ENCODE measurements at regions of chr14 and their contacts with region 1.

Region 1: GRCh38 chr14:55855751-55856150 is 262.5 kb upstream of the PELI2 start:
- DNase-seq: no peak
- ATAC-seq: no peak
- H3K4me3 ChIP-seq: no peak overlapping the region
- H3K27ac ChIP-seq: no peak overlapping the region
- H3K4me1 ChIP-seq: peaks cover 0 to 24% (median 3%) of the 10 kb centered on the region in 9 donors
- H3K27me3 ChIP-seq: no peaks in the 10 kb centered on the region
- CTCF ChIP-seq: no peak

Region 2: GRCh38 chr14:55614304-55614703 is 241.4 kb before region 1 on chr14:
- intact Hi-C with region 1: no loop called
- DNase-seq: no peak
- ATAC-seq: no peak
- H3K4me3 ChIP-seq: no peak overlapping the region
- H3K27ac ChIP-seq: no peak overlapping the region
- H3K4me1 ChIP-seq: peaks cover 0 to 58% (median 32%) of the 10 kb centered on the region in 9 donors
- H3K27me3 ChIP-seq: no peaks in the 10 kb centered on the region
- CTCF ChIP-seq: no peak

Region 3: DNA sequence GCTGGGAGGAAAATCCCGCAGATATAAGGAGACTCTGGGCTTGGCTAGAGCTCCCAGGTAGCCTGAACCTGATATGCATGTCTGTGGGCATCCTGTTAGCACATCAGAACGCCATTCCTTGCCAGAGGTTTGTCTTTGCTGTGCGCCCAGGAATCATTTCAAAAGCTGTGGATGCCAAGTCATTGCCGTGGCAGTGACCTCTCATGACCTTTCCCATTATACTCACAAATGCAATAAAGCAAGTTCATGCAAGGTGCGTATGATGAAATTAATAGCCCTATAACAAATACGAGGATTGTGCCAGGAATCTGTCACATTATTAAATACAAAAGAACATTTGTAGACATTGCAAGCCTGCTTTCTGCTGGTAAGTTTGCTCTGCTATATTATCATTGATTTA is 33.4 kb after region 1 on chr14:
- intact Hi-C with region 1: no loop called
- DNase-seq: no peak
- ATAC-seq: peak in 1 of 8 donors; percentile 59
- H3K4me3 ChIP-seq: no peak overlapping the region
- H3K27ac ChIP-seq: no peak overlapping the region
- H3K4me1 ChIP-seq: peaks cover 0 to 5% (median 0%) of the 10 kb centered on the region in 9 donors
- H3K27me3 ChIP-seq: no peaks in the 10 kb centered on the region
- CTCF ChIP-seq: no peak

Region 4: GRCh38 chr14:55901281-55901680 is 45.5 kb after region 1 on chr14:
- intact Hi-C with region 1: loop called in 1 of 10 experiments (anchors 2 kb)
- DNase-seq: no peak
- ATAC-seq: no peak
- H3K4me3 ChIP-seq: no peak overlapping the region
- H3K27ac ChIP-seq: no peak overlapping the region
- H3K4me1 ChIP-seq: no peaks in the 10 kb centered on the region
- H3K27me3 ChIP-seq: no peaks in the 10 kb centered on the region
- CTCF ChIP-seq: no peak